Mammary epithelial cell (primary cell): ENCODE measurements at regions of chr18 and their contacts with region 1.

Region 1: GRCh38 chr18:34787931-34788532 is 77.9 kb downstream of the DTNA start:
- DNase-seq: peak; percentile 42
- H3K4me3 ChIP-seq: no peak overlapping the region
- H3K27ac ChIP-seq: no peak overlapping the region
- H3K4me1 ChIP-seq: no peaks in the 10 kb centered on the region
- H3K27me3 ChIP-seq: no peaks in the 10 kb centered on the region
- CTCF ChIP-seq: peak; percentile 67 to 71

Region 2: DNA sequence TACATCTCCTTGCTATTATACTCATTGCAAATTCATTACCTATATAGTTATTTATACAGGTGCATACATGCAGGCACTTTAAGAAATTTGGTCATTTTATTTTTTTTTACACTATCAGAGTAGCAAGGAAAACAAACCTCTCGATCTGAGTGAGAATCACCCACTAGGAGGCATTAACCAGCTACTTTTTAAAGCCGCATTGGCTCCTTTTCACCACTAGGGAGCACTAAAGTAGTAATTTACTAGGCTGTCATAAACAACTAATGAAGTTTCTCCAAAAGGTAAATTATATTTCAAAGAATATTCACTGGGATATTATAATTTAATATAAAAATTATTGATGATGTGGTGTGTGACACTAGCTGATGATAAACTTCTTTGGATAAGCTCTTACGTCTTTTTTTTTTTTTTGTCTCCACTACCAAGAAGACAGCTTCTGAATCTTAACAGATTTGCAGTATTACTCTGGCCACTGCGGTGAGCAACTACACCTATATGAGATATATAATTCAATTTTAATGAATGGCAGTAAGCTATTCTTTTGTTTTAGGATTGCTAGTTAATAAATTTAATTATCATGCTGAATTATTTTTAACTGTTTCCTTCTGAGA is 665.2 kb before region 1 on chr18:
- CTCF ChIA-PET with region 1: interaction called, 14 read pairs
- dilution Hi-C with region 1: no loop called
- in situ Hi-C with region 1: loop called in 1 of 2 experiments (anchors 25 kb)
- intact Hi-C with region 1: loop called (anchors 1 kb)
- DNase-seq: peak; percentile 34
- H3K4me3 ChIP-seq: no peak overlapping the region
- H3K27ac ChIP-seq: no peak overlapping the region
- H3K4me1 ChIP-seq: peaks cover 19% of the 10 kb centered on the region
- H3K27me3 ChIP-seq: no peaks in the 10 kb centered on the region
- CTCF ChIP-seq: peak; percentile 95 to 98

Region 3: DNA sequence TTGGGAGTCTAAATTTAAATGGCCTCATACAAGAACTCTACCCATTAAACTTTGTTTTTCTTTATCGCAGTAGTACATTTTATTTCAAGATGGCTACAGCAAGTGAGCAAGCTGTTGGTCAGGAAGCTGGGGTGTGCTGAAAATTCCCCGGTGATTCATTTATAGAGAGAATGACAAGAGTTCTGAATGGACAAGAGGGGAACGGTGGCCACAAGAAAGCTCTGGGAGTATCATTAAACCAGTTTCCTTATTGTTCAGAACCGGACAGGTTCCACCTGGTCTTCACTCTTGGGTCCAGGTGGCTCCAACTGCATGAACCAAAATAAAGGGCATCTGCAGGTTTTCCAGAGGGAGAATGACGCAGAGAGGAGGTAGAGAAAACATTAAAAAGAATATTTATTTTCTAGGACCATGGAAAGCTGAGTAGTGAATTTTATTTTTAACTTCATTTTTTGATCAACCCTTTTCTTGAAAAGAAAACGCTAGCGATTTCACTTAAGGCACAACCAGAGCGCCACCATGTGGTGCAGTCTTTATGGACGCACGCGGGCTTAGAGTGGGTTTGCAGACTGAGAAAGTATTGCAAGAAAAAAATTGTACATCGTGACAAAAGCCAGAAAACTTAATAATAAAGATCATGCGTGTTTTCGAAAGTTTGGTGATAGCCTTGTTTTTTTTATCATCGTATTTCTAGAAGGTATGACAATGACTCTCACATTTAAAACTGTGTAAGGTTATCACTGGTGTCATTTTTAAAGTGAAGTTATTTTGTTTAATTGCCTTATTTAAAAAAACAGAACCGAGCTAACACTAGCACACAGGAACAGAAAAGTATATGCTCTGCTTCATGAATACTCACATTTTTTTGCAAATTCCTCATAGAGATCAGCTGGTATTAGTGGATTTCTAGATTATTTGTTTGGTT is 465.4 kb before region 1 on chr18:
- CTCF ChIA-PET with region 1: no interaction called
- dilution Hi-C with region 1: no loop called
- in situ Hi-C with region 1: no loop called
- intact Hi-C with region 1: loop called (anchors 5 kb)
- DNase-seq: peak; percentile 21
- H3K4me3 ChIP-seq: no peak overlapping the region
- H3K27ac ChIP-seq: no peak overlapping the region
- H3K4me1 ChIP-seq: no peaks in the 10 kb centered on the region
- H3K27me3 ChIP-seq: no peaks in the 10 kb centered on the region
- CTCF ChIP-seq: peak; percentile 68 to 82

Region 4: GRCh38 chr18:34592961-34593382 is 195.1 kb before region 1 on chr18:
- CTCF ChIA-PET with region 1: no interaction called
- dilution Hi-C with region 1: no loop called
- in situ Hi-C with region 1: loop called in 1 of 2 experiments (anchors 10 kb)
- intact Hi-C with region 1: loop called (anchors 1 kb)
- DNase-seq: peak; percentile 76
- H3K4me3 ChIP-seq: peak overlapping the region in 2 of 3 experiments; percentile 9 to 28
- H3K27ac ChIP-seq: no peak overlapping the region
- H3K4me1 ChIP-seq: no peaks in the 10 kb centered on the region
- H3K27me3 ChIP-seq: no peaks in the 10 kb centered on the region
- CTCF ChIP-seq: no peak

Region 5: DNA sequence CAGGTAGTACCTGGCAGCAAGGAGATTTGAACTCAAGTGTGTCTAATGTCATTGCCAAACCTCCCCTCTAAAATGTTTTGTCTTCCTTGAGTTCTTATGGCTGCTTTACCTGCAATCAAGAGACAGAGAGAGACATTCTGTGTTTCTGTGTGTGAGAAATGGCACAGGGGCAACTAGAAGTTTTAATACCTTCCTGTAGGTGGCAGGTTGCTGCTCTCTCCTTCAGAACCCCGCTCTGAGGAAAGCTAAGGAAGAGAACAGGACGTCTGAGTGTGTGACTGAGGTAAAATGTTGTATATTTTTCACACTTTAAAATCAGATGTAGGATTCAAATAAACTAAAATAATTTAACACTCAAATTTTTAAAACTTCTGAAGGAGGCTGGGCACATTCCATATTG is 58.8 kb before region 1 on chr18:
- CTCF ChIA-PET with region 1: no interaction called
- dilution Hi-C with region 1: no loop called
- in situ Hi-C with region 1: no loop called
- intact Hi-C with region 1: loop called (anchors 1 kb)
- DNase-seq: peak; percentile 40
- H3K4me3 ChIP-seq: no peak overlapping the region
- H3K27ac ChIP-seq: no peak overlapping the region
- H3K4me1 ChIP-seq: no peaks in the 10 kb centered on the region
- H3K27me3 ChIP-seq: no peaks in the 10 kb centered on the region
- CTCF ChIP-seq: peak; percentile 72 to 85

Region 6: DNA sequence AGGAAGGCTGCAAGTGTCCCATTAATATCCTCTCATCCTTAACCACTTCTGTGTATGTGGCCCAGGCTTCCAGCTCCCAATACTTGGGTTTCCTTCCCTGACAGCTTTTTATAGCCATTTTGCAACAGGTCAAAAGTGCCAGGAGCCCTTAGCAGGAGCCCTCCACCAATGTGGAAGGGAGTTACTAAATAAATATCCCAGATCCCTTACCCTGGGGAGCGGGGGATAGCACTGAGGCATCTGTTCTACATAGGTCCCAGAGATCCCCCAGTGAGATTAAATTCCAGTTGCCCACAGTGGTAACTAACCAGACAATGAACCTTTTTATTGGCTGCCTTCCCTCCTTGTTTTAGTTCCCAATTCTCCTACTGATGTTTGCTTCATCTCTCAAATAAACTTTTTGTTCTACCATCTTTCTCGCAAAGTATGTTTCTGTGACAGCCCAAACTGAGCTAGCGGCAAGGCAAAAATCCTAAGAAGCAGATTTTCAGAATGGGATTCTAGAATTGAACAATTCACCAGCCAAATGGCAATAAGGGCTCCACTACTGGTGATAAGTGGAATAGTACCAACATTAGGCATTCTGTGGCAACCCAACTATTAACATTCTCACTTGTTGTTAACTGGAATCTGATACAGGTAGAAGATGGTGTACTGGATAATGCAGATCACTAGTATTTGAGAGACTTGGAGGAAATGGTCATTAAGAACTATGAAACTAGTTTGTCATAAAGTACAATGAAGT is 169.3 kb after region 1 on chr18:
- CTCF ChIA-PET with region 1: no interaction called
- dilution Hi-C with region 1: no loop called
- in situ Hi-C with region 1: no loop called
- intact Hi-C with region 1: no loop called
- DNase-seq: no peak
- H3K4me3 ChIP-seq: no peak overlapping the region
- H3K27ac ChIP-seq: no peak overlapping the region
- H3K4me1 ChIP-seq: no peaks in the 10 kb centered on the region
- H3K27me3 ChIP-seq: no peaks in the 10 kb centered on the region
- CTCF ChIP-seq: no peak